OCI-LY7 (cell line): ENCODE measurements at regions of chr3 and their contacts with region 1.

Region 1: DNA sequence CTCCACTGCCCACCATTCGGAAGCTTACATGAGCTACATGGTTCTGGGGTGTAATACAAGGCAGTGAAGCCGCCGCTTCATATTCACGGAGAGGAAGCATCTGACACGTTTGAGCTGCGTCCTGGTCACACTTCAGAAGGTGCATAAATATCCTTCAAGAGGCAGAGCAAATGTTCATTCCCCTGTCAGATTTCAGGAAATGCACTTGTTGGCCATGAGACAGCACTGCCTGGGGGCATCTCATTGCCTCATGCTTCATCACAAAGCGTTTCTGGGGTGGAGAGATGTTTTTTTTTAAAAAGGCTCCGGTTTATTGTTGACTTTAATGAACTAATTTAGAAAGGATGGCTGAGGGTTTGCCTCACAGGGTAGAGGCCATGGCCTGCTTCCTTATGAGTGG is 119.9 kb downstream of the CADPS start:
- DNase-seq: peak; percentile 94
- H3K4me3 ChIP-seq: peak overlapping the region; percentile 39
- H3K27ac ChIP-seq: peak overlapping the region; percentile 87
- H3K4me1 ChIP-seq: peaks cover 47% of the 10 kb centered on the region
- CTCF ChIP-seq: no peak

Region 2: GRCh38 chr3:61821823-61822251 is 933.5 kb before region 1 on chr3:
- CTCF ChIA-PET with region 1: no interaction called
- POLR2A ChIA-PET with region 1: no interaction called
- intact Hi-C with region 1: no loop called
- DNase-seq: no peak
- H3K4me3 ChIP-seq: no peak overlapping the region
- H3K27ac ChIP-seq: no peak overlapping the region
- H3K4me1 ChIP-seq: peaks cover 17% of the 10 kb centered on the region
- CTCF ChIP-seq: no peak

Region 3: GRCh38 chr3:62768845-62769244 is 13.5 kb after region 1 on chr3:
- CTCF ChIA-PET with region 1: interaction called, 3 read pairs
- POLR2A ChIA-PET with region 1: interaction called, 15 read pairs
- intact Hi-C with region 1: no loop called
- DNase-seq: no peak
- H3K4me3 ChIP-seq: no peak overlapping the region
- H3K27ac ChIP-seq: no peak overlapping the region
- H3K4me1 ChIP-seq: peaks cover 7% of the 10 kb centered on the region
- CTCF ChIP-seq: no peak

Region 4: GRCh38 chr3:62777674-62778073 is 22.4 kb after region 1 on chr3:
- CTCF ChIA-PET with region 1: no interaction called
- POLR2A ChIA-PET with region 1: interaction called, 15 read pairs
- intact Hi-C with region 1: no loop called
- DNase-seq: no peak
- H3K4me3 ChIP-seq: no peak overlapping the region
- H3K27ac ChIP-seq: no peak overlapping the region
- H3K4me1 ChIP-seq: peaks cover 11% of the 10 kb centered on the region
- CTCF ChIP-seq: no peak

Region 5: GRCh38 chr3:62798000-62798399 is 42.7 kb after region 1 on chr3:
- CTCF ChIA-PET with region 1: interaction called, 3 read pairs
- POLR2A ChIA-PET with region 1: interaction called, 43 read pairs
- intact Hi-C with region 1: loop called (anchors 1 kb)
- DNase-seq: no peak
- H3K4me3 ChIP-seq: no peak overlapping the region
- H3K27ac ChIP-seq: peak overlapping the region; percentile 88
- H3K4me1 ChIP-seq: peaks cover 99% of the 10 kb centered on the region
- CTCF ChIP-seq: no peak

Region 6: DNA sequence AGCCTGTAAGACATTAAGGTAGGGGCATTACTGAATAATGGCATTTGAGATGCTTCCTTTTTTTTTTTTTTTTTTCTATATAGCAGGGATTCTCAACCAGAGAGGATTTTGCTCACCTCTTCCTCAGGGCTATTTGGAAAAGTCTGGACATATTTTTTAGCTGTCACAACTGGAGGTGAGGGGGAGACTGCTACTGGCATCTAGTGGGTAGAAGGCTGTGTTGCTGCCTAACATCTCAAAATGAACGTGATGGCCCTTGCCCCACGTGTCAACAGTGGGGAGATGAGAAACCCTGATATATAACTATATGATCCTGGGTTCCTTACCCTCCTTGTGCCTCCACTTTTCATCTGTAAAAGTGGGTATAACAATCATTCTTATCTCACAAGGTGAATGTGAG is 48.0 kb after region 1 on chr3:
- CTCF ChIA-PET with region 1: interaction called, 3 read pairs
- POLR2A ChIA-PET with region 1: interaction called, 10 read pairs
- intact Hi-C with region 1: no loop called
- DNase-seq: peak; percentile 80
- H3K4me3 ChIP-seq: no peak overlapping the region
- H3K27ac ChIP-seq: peak overlapping the region; percentile 75
- H3K4me1 ChIP-seq: peaks cover 95% of the 10 kb centered on the region
- CTCF ChIP-seq: peak; percentile 82

Region 7: DNA sequence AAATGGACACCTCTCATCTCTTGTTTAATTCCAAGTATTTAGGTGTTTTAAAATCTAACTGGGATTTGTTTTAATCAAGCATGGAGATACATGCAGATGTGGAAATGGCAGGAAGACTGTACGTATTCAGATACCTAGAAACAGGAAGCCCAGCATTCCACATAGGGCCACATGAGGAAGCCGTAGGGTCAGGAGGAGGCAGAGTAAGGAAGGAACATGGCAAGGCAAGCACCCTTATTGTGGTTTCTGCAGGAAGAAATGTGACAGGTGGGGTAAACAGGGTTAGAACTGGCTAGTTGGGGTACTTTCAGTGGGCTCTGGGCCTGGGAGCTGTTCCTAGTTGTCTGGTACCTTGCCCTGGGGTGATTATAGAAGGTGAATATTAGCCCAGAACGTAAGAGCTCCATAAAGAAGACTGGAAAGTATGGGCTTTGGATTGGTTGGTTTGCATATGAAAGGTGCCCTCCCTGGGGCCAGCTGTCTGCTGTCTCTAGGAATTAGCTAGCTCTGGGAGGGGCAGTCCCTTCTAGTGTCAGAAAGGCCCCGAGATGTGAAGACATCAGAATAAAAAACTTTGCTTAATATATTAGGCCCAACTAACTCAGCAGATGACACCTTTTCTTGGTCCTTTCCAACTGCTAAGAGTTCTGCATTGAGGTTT is 227.6 kb after region 1 on chr3:
- CTCF ChIA-PET with region 1: no interaction called
- POLR2A ChIA-PET with region 1: no interaction called
- intact Hi-C with region 1: no loop called
- DNase-seq: no peak
- H3K4me3 ChIP-seq: no peak overlapping the region
- H3K27ac ChIP-seq: no peak overlapping the region
- H3K4me1 ChIP-seq: no peaks in the 10 kb centered on the region
- CTCF ChIP-seq: no peak